Dendritic cell treated with granulocyte-macrophage colony-stimulating factor and Interleukin-4, amounts not matched to agents 40 ng/mL and 50 ng/mL, for 4 days (primary cell): ENCODE measurements at regions of chr16 and their contacts with region 1.

Region 1: DNA sequence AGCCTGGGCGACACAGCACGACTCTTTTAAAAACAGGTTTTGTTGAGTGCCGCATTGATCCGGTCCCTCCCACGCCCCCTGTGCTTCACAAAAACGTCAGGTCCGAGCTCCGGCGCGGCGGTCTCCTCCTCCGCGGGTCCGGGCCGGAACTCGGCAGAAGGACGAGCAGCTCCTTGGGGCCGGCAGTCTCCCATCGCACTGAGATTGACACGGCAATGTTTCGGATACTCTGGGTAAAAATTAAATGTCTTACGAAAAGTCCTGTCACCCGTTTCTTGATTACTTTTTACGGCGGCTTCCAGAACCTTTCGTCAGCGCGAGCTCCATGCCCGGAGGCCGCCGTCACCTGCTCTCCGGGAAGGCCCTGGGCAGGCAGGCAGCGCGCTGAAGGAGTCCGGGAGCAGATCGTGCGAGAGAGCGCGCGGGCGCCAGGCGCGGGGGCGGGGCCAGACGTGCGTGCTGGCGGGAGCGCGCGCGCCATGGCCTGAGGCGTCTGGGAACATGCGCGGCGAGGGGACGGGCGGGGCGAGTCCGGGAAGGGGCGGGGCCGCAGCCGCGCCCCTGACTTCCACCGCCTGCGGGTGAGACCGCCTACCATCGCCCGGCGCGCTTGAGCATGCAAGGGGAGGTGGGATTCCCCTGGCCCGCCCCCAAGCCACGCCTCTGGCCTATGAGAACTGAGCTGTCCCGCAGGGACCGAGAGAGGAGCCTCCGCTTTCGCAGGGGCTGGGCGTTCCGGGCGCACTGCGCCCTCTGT is 11.7 kb upstream of the SRL start:
- H3K4me3 Mint-ChIP-seq: peak overlapping the region; percentile 91
- H3K27ac Mint-ChIP-seq: peak overlapping the region; percentile 98
- H3K4me1 Mint-ChIP-seq: peaks cover 9% of the 10 kb centered on the region
- H3K27me3 Mint-ChIP-seq: no peaks in the 10 kb centered on the region

Region 2: GRCh38 chr16:3983081-3983520 is 270.5 kb before region 1 on chr16:
- intact Hi-C with region 1: loop called (anchors 2 kb)
- H3K4me3 Mint-ChIP-seq: peak overlapping the region; percentile 21
- H3K27ac Mint-ChIP-seq: peak overlapping the region; percentile 2
- H3K4me1 Mint-ChIP-seq: peaks cover 16% of the 10 kb centered on the region
- H3K27me3 Mint-ChIP-seq: peaks cover 6% of the 10 kb centered on the region

Region 3: GRCh38 chr16:4116337-4117249 is 137.0 kb before region 1 on chr16 and contains the start of gene ADCY9:
- intact Hi-C with region 1: loop called (anchors 2 kb)
- H3K4me3 Mint-ChIP-seq: peak within 1 kb of the TSS; percentile 84
- H3K27ac Mint-ChIP-seq: peak within 1 kb of the TSS; percentile 64
- H3K4me1 Mint-ChIP-seq: peaks cover 48% of the 10 kb centered on the region
- H3K27me3 Mint-ChIP-seq: peaks cover 38% of the 10 kb centered on the region

Region 4: GRCh38 chr16:4271176-4272066 is 17.8 kb after region 1 on chr16:
- intact Hi-C with region 1: loop called (anchors 1 kb)
- H3K4me3 Mint-ChIP-seq: peak overlapping the region; percentile 88
- H3K27ac Mint-ChIP-seq: peak overlapping the region; percentile 91
- H3K4me1 Mint-ChIP-seq: peaks cover 18% of the 10 kb centered on the region
- H3K27me3 Mint-ChIP-seq: peaks cover 4% of the 10 kb centered on the region

Region 5: DNA sequence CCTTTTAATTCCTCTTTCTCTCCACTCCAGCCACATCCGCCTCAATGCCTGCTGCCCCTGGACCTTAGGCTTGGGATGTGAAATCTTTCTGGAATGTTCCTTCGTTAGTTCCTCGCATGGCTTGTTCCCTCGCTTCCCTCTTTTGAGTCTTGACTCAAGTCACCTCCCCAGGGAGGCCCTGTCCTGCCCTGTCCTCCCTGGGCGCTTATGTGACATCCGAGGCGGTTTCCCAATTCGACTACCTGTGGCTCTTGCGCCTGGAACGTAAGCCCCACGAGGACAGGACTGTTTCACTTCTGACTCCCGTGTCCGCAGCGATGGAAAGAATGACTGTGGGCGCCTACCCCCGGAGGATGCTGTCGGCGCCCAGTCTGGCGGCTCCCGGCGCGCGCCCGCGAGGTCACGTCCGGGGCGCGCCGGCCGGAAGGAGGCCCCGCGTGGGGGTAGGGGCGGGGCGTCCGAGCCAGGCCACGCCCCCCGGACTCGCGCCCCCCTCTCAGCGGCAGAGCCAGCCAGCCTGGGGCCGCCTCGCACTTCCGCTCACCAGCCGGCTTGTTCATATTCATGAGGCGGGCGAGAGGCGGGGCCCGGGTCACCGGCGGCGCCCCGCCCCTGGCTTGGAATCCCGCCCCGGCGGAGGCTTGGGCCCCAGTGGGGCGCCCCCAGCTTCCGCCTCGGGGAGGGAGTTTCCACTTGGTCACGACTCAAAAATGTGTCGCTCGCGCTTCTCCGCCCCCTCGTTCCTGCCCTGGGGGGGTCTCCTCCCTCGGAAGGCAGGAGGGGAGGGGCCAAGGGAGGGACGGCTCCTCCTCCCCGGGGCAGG is 53.9 kb after region 1 on chr16:
- intact Hi-C with region 1: loop called (anchors 1 kb)
- H3K4me3 Mint-ChIP-seq: peak overlapping the region; percentile 86
- H3K27ac Mint-ChIP-seq: peak overlapping the region; percentile 87
- H3K4me1 Mint-ChIP-seq: peaks cover 47% of the 10 kb centered on the region
- H3K27me3 Mint-ChIP-seq: peaks cover 12% of the 10 kb centered on the region

Region 6: DNA sequence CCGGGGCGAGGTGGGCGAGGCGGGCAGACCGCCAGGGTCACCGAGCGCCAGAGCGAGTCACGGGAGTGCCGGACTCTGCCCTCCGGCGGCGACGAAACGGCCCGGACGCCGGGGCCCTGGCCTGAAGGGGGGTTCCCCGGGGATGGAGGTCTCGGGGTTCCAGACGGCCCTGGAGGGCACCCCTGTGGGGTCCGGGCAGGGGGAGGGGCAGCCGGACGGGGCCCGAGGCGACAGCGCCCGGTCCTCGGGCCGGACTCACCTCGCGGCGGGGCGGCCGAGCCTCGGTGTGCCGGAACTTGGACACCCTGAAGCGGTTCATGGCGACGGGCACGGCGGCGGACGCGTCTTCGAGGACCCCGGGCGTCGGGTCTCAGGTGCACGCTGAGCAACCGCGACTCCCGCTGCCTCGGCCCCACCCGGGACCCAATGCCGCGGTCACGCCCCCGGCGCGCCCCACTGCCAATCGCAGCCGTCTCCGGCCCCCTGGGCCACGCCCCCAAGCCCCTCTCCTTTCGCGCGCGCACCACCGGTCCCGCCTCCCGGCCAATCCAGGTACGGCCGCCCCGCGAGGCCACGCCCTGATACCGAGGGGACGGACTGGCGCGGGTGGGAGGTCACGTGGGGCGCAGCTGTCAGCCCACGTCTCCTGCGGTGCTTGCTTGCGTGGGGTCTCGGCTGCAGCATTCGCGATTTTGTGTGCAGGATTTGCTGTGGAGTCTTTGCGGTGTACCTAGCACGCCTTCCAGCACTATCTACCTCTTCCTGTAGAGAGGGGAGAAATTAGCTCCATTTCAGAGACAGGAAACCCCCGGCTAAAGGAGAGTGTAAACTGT is 162.8 kb after region 1 on chr16 and contains the start of gene CORO7:
- intact Hi-C with region 1: no loop called
- H3K4me3 Mint-ChIP-seq: peak within 1 kb of the TSS; percentile 86
- H3K27ac Mint-ChIP-seq: peak within 1 kb of the TSS; percentile 97
- H3K4me1 Mint-ChIP-seq: peaks cover 73% of the 10 kb centered on the region
- H3K27me3 Mint-ChIP-seq: no peaks in the 10 kb centered on the region